ENCODE measurements at regions of chrX and their contacts with region 1.

Region 1: GRCh38 chrX:123169247-123169901 is 14.7 kb upstream of the GRIA3 start:
- DNase-seq: no peak
- ATAC-seq: no peak
- H3K4me3 ChIP-seq: no peak overlapping the region
- H3K4me3 Mint-ChIP-seq: no peak overlapping the region
- H3K27ac ChIP-seq: no peak overlapping the region
- H3K27ac Mint-ChIP-seq: no peak overlapping the region
- H3K4me1 ChIP-seq: no peaks in the 10 kb centered on the region
- H3K4me1 Mint-ChIP-seq: no peaks in the 10 kb centered on the region
- H3K27me3 ChIP-seq: no peaks in the 10 kb centered on the region
- H3K27me3 Mint-ChIP-seq: peaks cover 6 to 35% of the 10 kb centered on the region in 2 donors

Region 2: DNA sequence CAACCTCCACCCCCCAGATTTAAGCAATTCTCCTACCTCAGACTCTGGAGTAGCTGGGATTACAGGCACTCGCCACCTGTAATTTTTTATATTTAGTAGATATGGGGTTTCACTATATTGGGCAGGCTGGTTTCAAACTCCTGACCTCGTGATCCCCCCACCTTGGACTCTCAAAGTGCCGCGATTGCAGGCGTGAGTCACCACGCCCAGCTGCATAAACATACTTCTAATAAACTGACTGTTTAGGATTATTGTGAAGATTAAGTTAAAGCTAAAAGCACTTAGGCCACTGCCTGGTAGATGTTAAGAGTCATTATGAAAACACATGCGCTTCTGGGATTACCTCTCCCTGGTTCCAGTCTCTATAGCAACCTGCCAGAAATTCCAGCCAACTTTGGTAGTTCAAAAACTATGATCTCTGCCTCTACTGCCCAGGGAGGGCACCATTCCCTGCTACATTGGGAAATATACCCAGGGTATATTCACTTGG is 15.5 kb before region 1 on chrX:
- CTCF ChIA-PET with region 1: no interaction called
- POLR2A ChIA-PET with region 1: no interaction called
- DNase-seq: no peak
- ATAC-seq: no peak
- H3K4me3 ChIP-seq: no peak overlapping the region
- H3K4me3 Mint-ChIP-seq: no peak overlapping the region
- H3K27ac ChIP-seq: no peak overlapping the region
- H3K27ac Mint-ChIP-seq: no peak overlapping the region
- H3K4me1 ChIP-seq: no peaks in the 10 kb centered on the region
- H3K4me1 Mint-ChIP-seq: no peaks in the 10 kb centered on the region
- H3K27me3 ChIP-seq: no peaks in the 10 kb centered on the region
- H3K27me3 Mint-ChIP-seq: peaks cover 0 to 5% of the 10 kb centered on the region in 2 donors

Region 3: GRCh38 chrX:123188081-123188480 is 18.7 kb after region 1 on chrX:
- CTCF ChIA-PET with region 1: no interaction called
- POLR2A ChIA-PET with region 1: no interaction called
- DNase-seq: no peak
- ATAC-seq: no peak
- H3K4me3 ChIP-seq: no peak overlapping the region
- H3K4me3 Mint-ChIP-seq: no peak overlapping the region
- H3K27ac ChIP-seq: no peak overlapping the region
- H3K27ac Mint-ChIP-seq: no peak overlapping the region
- H3K4me1 ChIP-seq: peaks cover 0 to 2% of the 10 kb centered on the region in 2 experiments
- H3K4me1 Mint-ChIP-seq: peaks cover 1 to 16% (median 13%) of the 10 kb centered on the region in 3 donors
- H3K27me3 ChIP-seq: peaks cover 0 to 22% of the 10 kb centered on the region in 2 experiments
- H3K27me3 Mint-ChIP-seq: peaks cover 29 to 61% of the 10 kb centered on the region in 2 donors

Region 4: GRCh38 chrX:123236859-123237258 is 67.5 kb after region 1 on chrX:
- CTCF ChIA-PET with region 1: interaction called in 1 of 2 experiments, 10 read pairs
- POLR2A ChIA-PET with region 1: no interaction called
- DNase-seq: no peak
- ATAC-seq: no peak
- H3K4me3 ChIP-seq: no peak overlapping the region
- H3K4me3 Mint-ChIP-seq: no peak overlapping the region
- H3K27ac ChIP-seq: no peak overlapping the region
- H3K27ac Mint-ChIP-seq: no peak overlapping the region
- H3K4me1 ChIP-seq: no peaks in the 10 kb centered on the region
- H3K4me1 Mint-ChIP-seq: no peaks in the 10 kb centered on the region
- H3K27me3 ChIP-seq: no peaks in the 10 kb centered on the region
- H3K27me3 Mint-ChIP-seq: peaks cover 0 to 27% of the 10 kb centered on the region in 2 donors

Measured in T-cell (primary cell).